ENCODE measurements at regions of chr17 and their contacts with region 1.

Region 1: DNA sequence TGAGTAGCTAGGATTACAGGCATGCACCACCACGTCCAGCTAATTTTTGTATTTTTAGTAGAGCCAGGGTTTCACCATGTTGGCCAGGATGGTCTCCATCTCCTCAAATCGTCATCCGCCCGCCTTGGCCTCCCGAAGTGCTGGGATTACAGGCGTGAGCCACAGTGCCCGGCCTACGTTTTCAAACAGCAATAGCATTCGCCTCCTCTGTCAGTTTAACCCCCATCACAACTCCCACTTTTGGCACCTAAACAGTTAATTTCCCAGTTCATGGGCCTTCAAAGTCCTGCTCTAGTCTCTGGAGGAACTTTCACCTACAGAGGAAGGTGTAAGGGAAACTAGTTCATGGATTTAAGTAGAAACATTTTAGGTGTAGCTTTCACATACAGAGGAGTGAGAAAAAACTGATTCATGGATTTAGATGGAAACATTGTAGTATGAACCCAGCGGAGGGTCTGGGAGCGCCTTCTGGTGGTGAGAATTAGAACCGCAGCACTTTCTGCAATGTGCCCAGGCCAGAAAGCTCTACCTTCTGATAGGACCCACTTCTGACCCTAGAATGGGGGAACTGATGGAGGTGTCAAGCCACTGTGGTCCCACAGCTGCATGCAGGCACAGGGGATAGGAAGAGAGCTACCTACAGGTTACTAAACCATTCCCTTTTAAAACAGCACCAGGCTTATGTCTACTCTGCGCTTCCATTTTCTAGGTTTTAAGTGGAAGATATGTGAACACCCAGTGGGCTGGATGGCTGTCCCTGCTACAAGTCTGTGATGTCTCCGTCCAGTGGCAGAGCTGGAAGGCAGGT is 12.0 kb upstream of the MEOX1 start:
- DNase-seq: peak; percentile 66
- H3K4me3 Mint-ChIP-seq: no peak overlapping the region
- H3K27ac Mint-ChIP-seq: no peak overlapping the region
- H3K4me1 Mint-ChIP-seq: peaks cover 9% of the 10 kb centered on the region
- H3K27me3 Mint-ChIP-seq: no peaks in the 10 kb centered on the region
- CTCF ChIP-seq: peak; percentile 91

Region 2: DNA sequence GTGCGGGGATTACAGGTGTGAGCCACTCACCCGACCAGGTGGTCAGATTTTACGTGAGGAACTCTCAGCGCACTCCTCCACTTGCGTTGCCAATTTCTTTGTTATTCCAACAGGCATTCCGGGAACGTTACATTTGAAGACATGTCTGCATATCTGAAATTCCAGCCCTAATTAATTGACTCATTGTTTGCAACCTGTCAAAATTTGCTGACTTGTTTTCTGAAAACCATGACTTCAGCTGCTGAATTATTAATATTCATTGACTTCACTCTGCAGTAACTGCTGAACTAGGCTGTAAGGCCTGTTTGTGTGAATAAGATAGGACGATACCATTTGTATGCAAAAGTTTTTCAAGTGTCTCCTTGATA is 756.5 kb before region 1 on chr17:
- CTCF ChIA-PET with region 1: no interaction called
- POLR2A ChIA-PET with region 1: no interaction called
- intact Hi-C with region 1: no loop called
- DNase-seq: no peak
- H3K4me3 Mint-ChIP-seq: no peak overlapping the region
- H3K27ac Mint-ChIP-seq: no peak overlapping the region
- H3K4me1 Mint-ChIP-seq: peaks cover 5% of the 10 kb centered on the region
- H3K27me3 Mint-ChIP-seq: peaks cover 10% of the 10 kb centered on the region
- CTCF ChIP-seq: no peak

Region 3: DNA sequence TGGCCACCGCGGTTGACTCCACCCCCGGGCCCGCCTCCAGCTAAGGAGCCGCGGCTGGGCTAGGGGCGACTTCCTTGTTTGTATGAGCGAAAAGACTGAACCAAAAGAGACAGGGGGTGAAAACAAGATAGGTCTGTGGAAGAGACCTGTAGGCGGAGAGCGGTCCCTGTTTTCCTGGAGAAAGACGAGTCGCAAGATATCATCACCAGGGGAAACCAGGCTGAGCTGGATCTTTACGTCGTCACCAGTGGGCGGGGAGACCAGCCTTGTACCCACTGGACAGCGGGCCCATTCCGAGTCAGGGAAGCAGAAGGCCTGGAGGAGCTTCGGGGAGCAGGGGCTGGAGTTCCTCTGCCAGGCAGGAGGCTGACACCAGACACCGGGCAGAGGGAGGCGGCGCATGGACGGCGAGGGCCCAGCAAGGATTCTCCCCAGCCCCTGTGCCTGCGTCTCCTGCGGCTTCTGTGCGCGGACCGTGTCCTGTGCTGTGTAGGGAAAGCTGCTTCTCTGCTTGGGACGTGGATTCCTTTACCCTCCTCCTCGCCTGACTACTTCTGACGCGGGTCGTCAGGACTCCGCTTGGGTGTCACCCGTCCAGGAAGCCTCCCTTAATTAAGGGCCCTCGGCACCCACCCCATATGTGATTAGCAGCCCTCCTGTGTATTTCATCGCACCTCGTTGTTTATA is 285.2 kb before region 1 on chr17:
- CTCF ChIA-PET with region 1: no interaction called
- POLR2A ChIA-PET with region 1: no interaction called
- intact Hi-C with region 1: no loop called
- DNase-seq: peak; percentile 94
- H3K4me3 Mint-ChIP-seq: peak overlapping the region; percentile 83
- H3K27ac Mint-ChIP-seq: peak overlapping the region; percentile 97
- H3K4me1 Mint-ChIP-seq: peaks cover 18% of the 10 kb centered on the region
- H3K27me3 Mint-ChIP-seq: no peaks in the 10 kb centered on the region
- CTCF ChIP-seq: no peak

Region 4: GRCh38 chr17:43601280-43602039 is 72.3 kb before region 1 on chr17:
- CTCF ChIA-PET with region 1: interaction called, 13 read pairs
- POLR2A ChIA-PET with region 1: interaction called, 3 read pairs
- intact Hi-C with region 1: no loop called
- DNase-seq: no peak
- H3K4me3 Mint-ChIP-seq: no peak overlapping the region
- H3K27ac Mint-ChIP-seq: no peak overlapping the region
- H3K4me1 Mint-ChIP-seq: peaks cover 8% of the 10 kb centered on the region
- H3K27me3 Mint-ChIP-seq: peaks cover 14% of the 10 kb centered on the region
- CTCF ChIP-seq: no peak

Region 5: DNA sequence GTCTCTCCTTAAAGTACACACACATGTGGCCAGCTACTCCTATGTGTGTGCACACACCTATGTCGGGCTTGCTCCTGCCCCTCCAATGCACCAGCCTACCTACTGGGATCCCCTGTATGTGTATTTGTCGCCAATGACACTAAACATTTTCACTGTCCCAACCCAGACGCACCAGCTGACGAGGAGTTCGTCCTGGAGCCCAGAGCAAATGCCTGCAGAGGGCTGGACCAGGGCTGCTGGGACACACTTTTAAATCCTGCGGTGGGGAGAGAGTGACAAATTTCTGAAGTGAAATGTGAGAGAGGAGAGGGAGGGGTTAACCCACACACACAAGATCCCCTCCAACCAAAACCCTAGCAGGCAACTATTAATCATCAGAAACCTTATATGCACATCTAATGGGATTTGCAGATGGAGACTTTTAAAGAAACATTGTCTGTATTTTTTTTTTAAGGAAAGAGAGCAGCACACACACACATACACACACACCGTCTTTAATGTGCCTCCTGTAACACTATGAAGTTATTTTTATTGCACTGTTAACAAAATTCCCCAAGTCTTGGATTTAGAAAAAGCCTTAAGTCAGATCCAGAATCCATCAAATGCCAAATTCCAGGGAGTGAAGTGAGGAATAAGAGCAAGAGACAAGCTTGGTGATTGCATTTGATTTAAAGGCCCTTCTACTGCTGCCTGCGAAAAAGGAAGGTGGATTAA is 11.9 kb before region 1 on chr17 and contains the start of gene MEOX1:
- CTCF ChIA-PET with region 1: interaction called, 22 read pairs
- POLR2A ChIA-PET with region 1: interaction called, 4 read pairs
- intact Hi-C with region 1: no loop called
- DNase-seq: peak; percentile 66
- H3K4me3 Mint-ChIP-seq: no peak within 1 kb of the TSS
- H3K27ac Mint-ChIP-seq: no peak within 1 kb of the TSS
- H3K4me1 Mint-ChIP-seq: peaks cover 6% of the 10 kb centered on the region
- H3K27me3 Mint-ChIP-seq: no peaks in the 10 kb centered on the region
- CTCF ChIP-seq: no peak
- total RNA-seq, gene MEOX1: not detected in 2 replicates